ENCODE measurements at regions of chr19 and their contacts with region 1.

Region 1: DNA sequence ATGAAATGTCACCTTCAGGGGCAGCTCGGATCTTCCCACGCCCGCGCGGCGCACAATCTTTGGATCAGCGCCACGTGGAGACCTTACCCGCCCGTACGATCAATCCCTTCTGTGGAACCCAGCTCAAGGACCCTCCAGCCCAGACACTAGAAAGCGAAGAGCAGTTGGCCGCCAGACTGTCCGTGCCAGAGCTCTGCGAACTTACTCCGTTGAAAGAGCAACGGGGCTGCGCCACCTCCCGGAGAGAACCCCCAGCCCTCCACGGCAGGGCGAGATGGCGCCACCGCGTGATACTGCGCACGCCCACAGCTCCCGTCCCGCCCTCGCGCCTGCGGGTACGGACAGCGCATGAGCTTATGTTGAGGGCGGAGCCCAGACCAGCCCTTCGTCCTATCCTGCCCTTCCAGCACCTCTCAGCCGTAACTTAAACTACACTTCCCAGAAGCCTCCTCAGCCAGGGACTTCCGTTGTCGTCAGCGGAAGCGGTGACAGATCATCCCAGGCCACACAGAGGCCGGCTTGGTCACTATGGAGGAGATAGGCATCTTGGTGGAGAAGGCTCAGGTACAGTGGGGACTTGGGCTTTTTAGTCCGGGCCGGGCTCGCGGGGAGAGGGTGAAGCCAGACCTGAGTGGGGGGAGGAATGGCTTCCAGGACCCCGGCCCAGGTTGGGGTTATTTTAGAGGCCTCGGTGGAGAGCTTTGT is at the start of gene PSMC4:
- DNase-seq: peak; percentile 99
- ATAC-seq: peak; percentile 99
- H3K4me3 Mint-ChIP-seq: peak within 1 kb of the TSS; percentile 95
- H3K27ac Mint-ChIP-seq: peak within 1 kb of the TSS; percentile 95
- H3K4me1 Mint-ChIP-seq: peaks cover 43% of the 10 kb centered on the region
- H3K27me3 Mint-ChIP-seq: no peaks in the 10 kb centered on the region
- total RNA-seq, gene PSMC4: 120 to 121 TPM

Region 2: DNA sequence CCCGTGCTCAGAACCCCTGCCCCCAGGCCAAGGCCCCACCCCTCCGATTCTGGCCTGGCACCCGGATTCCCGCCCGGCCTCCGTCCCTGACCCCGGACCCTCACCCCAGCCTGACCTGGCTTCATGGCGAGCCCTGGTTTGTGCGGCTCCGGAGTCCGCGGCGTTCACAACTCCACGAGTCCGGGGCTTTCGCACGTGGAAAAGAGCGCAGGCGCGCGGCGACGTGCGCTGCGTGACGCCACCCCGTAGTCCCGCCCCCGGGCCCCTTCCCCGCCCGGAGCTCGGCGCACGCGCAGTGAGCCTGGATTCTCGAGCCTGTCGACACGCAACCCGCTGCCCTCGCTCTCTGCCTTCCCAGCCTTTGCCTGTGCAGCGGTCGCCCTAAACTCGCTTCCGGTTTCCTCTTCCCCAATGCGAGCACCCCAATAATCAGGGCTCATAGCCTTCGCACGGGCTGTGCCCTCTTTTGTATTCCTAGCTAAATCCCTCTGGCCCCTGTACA is 124.6 kb before region 1 on chr19 and contains the start of gene FBL:
- CTCF ChIA-PET with region 1: interaction called, 24 read pairs
- POLR2A ChIA-PET with region 1: interaction called, 7 read pairs
- DNase-seq: peak; percentile 98
- ATAC-seq: peak; percentile 93
- H3K4me3 Mint-ChIP-seq: peak within 1 kb of the TSS; percentile 91
- H3K27ac Mint-ChIP-seq: peak within 1 kb of the TSS; percentile 90
- H3K4me1 Mint-ChIP-seq: peaks cover 46% of the 10 kb centered on the region
- H3K27me3 Mint-ChIP-seq: no peaks in the 10 kb centered on the region
- total RNA-seq, gene FBL: 385 to 399 TPM

Region 3: GRCh38 chr19:39858541-39858940 is 112.3 kb before region 1 on chr19:
- CTCF ChIA-PET with region 1: no interaction called
- POLR2A ChIA-PET with region 1: no interaction called
- DNase-seq: peak; percentile 72
- ATAC-seq: peak; percentile 99
- H3K4me3 Mint-ChIP-seq: peak overlapping the region; percentile 50
- H3K27ac Mint-ChIP-seq: peak overlapping the region; percentile 48
- H3K4me1 Mint-ChIP-seq: peaks cover 4% of the 10 kb centered on the region
- H3K27me3 Mint-ChIP-seq: peaks cover 3% of the 10 kb centered on the region

Region 4: GRCh38 chr19:39916851-39917396 is 53.9 kb before region 1 on chr19:
- CTCF ChIA-PET with region 1: interaction called, 16 read pairs
- POLR2A ChIA-PET with region 1: interaction called, 3 read pairs
- DNase-seq: no peak
- ATAC-seq: no peak
- H3K4me3 Mint-ChIP-seq: no peak overlapping the region
- H3K27ac Mint-ChIP-seq: no peak overlapping the region
- H3K4me1 Mint-ChIP-seq: no peaks in the 10 kb centered on the region
- H3K27me3 Mint-ChIP-seq: no peaks in the 10 kb centered on the region

Region 5: DNA sequence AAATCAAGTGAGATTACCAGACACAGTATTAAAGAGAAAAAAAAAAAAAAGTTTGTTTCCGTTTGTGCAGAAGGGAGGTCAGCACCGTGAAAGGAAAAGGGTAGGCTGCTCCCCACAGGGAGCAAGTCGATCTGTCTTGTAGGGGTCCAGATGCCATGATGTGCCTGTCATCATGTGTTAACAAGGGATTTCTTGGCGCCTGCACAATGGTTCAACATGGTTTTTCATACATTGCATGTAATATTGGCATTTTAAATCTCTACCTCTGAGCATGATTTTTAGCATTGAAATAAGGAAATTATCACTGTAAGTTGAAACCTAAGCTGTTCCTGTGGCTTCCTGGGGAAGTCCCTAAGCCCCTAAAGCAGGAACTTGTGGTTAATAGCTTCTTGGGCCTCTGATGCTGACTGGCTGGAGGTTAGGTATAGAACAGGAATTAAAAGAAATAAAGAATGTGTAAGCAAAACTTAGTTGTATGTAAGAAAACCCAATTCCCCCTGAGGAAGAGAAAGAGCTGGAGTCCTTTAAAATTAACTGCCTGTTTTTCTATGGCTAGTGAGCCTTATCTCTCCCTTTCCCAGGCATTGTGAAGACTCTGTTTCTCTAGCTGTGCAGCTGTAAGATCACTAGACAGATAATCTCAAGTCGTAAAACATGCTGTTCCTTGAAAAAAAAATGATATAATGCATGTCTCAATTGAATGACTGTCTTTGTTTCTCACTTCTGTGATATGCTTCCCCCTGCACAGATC is 29.0 kb before region 1 on chr19:
- CTCF ChIA-PET with region 1: interaction called, 133 read pairs
- POLR2A ChIA-PET with region 1: interaction called, 31 read pairs
- DNase-seq: peak; percentile 73
- ATAC-seq: peak; percentile 86
- H3K4me3 Mint-ChIP-seq: peak overlapping the region; percentile 59
- H3K27ac Mint-ChIP-seq: peak overlapping the region; percentile 88
- H3K4me1 Mint-ChIP-seq: peaks cover 70% of the 10 kb centered on the region
- H3K27me3 Mint-ChIP-seq: no peaks in the 10 kb centered on the region

Region 6: DNA sequence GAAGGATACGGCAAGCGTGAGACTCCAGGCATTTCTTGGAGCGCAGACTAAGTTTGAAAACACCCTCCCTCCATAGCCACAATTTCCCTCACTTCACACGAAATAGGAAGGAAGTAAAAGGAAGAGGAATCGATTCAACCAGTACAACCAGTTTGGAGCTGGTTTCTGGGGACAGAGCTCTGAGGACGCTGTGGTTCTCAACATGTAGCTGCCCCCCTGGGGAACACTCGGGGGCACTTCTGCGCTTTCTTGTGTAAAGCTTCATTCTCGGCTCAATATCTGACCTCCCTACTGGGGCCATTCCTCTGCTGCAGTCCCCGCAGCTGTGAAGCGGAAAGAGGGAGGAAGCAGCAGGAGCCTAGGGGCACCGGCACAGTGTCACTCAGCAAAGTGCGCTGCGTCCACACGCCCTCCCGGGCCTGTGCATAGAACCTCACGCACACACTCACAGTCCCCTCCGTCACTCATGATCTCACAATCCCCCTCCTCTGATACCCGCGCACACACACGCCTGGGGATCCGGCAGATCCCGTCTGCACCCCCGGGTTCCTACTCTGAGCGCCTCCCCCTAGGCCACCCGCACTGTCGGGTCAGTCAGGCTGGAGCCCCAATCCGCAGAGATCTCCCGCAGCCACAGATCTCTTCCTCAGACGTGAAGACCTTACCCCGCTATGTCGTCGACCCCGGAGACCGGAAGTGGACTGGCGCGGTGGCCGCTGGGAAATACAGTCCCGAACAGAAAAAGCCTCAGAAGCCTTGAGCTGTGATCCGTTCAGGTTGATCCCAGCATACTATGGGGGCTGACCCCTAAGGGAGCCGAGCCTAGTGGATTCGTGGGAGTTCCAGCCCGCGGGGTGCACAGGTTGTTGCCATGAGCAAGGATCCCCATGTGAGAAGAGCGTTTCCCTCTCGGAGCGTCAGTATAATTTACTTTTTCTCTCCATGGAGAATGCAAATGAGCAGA is 119.7 kb after region 1 on chr19 and contains the start of gene ZNF780A:
- CTCF ChIA-PET with region 1: interaction called, 5 read pairs
- POLR2A ChIA-PET with region 1: interaction called, 12 read pairs
- DNase-seq: peak; percentile 84
- ATAC-seq: peak; percentile 93
- H3K4me3 Mint-ChIP-seq: peak within 1 kb of the TSS; percentile 100
- H3K27ac Mint-ChIP-seq: peak within 1 kb of the TSS; percentile 100
- H3K4me1 Mint-ChIP-seq: peaks cover 35% of the 10 kb centered on the region
- H3K27me3 Mint-ChIP-seq: peaks cover 11% of the 10 kb centered on the region
- total RNA-seq, gene ZNF780A: 17.9 to 21.6 TPM

Region 7: DNA sequence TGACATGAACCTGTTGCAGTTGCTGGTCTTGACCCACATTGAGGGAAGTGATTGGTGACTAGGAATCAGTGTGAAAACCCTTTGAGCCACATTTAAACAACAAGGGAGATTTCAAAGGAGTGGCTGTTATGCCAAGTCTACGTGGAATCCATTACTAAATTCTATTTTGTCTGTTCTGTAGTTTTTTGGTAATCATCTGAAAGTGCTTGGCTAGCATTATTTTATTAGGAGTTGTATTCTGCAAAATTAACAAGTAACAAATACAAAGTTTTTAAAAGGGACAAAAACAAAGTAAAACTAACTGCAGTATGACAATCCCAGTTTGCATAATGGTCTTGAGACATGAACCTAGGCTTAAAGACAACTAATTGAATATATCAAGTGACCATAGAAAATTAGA is 133.9 kb after region 1 on chr19:
- CTCF ChIA-PET with region 1: no interaction called
- POLR2A ChIA-PET with region 1: no interaction called
- DNase-seq: no peak
- ATAC-seq: no peak
- H3K4me3 Mint-ChIP-seq: no peak overlapping the region
- H3K27ac Mint-ChIP-seq: no peak overlapping the region
- H3K4me1 Mint-ChIP-seq: no peaks in the 10 kb centered on the region
- H3K27me3 Mint-ChIP-seq: no peaks in the 10 kb centered on the region

Measured in activated CD8-positive, alpha-beta T cell treated with anti-CD3 and anti-CD28 coated beads, Interleukin-2, amount 10 ng/mL, durations not matched to agents 7 days and 5 days (primary cell).